ENCODE measurements at regions of chr14 and their contacts with region 1.

Region 1: DNA sequence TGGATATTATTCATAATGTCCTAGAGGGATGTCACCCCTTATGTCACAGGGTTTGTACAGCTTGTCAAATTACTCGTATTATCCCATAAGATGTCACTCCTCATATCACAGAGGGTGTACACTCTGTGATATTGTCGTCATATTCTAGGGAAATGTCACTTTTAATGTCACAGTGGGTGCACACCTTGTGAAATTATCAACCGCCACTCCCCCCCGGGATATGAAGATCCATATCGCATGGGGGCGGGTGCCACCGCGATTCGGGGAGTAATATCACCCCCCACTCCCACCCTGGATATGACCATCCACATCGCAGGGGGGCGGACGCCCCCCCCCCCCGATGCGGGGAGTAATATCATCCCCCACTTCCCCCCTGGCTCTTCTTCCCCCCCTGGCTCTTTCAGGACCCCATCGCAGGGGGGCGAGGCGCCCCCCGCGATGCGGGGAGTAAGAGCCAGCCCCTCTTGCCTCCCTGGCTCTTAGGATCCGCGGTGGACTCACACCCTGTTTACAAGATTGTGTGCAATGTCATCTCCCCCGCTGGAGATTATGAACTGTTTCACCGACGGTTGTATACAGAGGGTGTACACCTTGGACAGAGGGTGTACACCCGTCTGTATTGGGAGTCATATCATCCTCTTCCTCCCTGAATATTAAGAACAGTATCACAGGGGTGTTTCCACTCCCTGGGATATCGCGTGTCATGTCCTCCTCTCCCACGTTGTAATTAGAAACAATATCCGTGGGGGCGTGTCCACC is 92.8 kb downstream of the FRMD6 start:
- DNase-seq: peak; percentile 44
- H3K4me3 Mint-ChIP-seq: no peak overlapping the region
- H3K27ac Mint-ChIP-seq: no peak overlapping the region
- H3K4me1 Mint-ChIP-seq: no peaks in the 10 kb centered on the region
- H3K27me3 Mint-ChIP-seq: peaks cover 4% of the 10 kb centered on the region

Region 2: GRCh38 chr14:51248016-51248987 is 496.2 kb before region 1 on chr14:
- CTCF ChIA-PET with region 1: no interaction called
- POLR2A ChIA-PET with region 1: no interaction called
- intact Hi-C with region 1: no loop called
- DNase-seq: no peak
- H3K4me3 Mint-ChIP-seq: no peak overlapping the region
- H3K27ac Mint-ChIP-seq: no peak overlapping the region
- H3K4me1 Mint-ChIP-seq: peaks cover 30% of the 10 kb centered on the region
- H3K27me3 Mint-ChIP-seq: no peaks in the 10 kb centered on the region

Region 3: DNA sequence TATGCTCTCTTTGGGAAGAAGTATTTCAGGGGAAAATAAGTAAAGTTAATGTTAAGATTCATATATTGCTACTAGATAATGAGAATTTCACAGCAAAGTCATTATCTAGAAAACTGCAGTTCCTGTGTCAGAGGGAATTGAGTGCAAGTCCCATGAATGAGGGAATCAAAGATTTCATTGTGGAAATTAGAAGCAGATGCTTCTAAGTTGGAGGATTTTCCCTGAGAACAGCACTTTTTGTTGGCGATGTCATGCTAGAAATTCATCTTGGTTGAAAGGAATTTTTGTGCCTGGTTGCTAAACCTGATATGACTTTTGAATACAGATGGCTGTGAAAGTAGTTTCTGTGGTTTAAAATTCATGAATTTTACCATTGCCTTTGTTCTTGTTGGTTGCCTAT is 67.3 kb before region 1 on chr14:
- CTCF ChIA-PET with region 1: no interaction called
- POLR2A ChIA-PET with region 1: no interaction called
- intact Hi-C with region 1: loop called (anchors 2 kb)
- DNase-seq: no peak
- H3K4me3 Mint-ChIP-seq: no peak overlapping the region
- H3K27ac Mint-ChIP-seq: no peak overlapping the region
- H3K4me1 Mint-ChIP-seq: peaks cover 18% of the 10 kb centered on the region
- H3K27me3 Mint-ChIP-seq: peaks cover 19% of the 10 kb centered on the region

Region 4: GRCh38 chr14:51865953-51866747 is 121.6 kb after region 1 on chr14:
- CTCF ChIA-PET with region 1: no interaction called
- POLR2A ChIA-PET with region 1: no interaction called
- intact Hi-C with region 1: loop called (anchors 5 kb)
- DNase-seq: peak; percentile 46
- H3K4me3 Mint-ChIP-seq: no peak overlapping the region
- H3K27ac Mint-ChIP-seq: no peak overlapping the region
- H3K4me1 Mint-ChIP-seq: peaks cover 19% of the 10 kb centered on the region
- H3K27me3 Mint-ChIP-seq: no peaks in the 10 kb centered on the region

Region 5: GRCh38 chr14:52531481-52531880 is 786.9 kb after region 1 on chr14:
- CTCF ChIA-PET with region 1: no interaction called
- POLR2A ChIA-PET with region 1: no interaction called
- intact Hi-C with region 1: loop called (anchors 10 kb)
- DNase-seq: no peak
- H3K4me3 Mint-ChIP-seq: no peak overlapping the region
- H3K27ac Mint-ChIP-seq: no peak overlapping the region
- H3K4me1 Mint-ChIP-seq: no peaks in the 10 kb centered on the region
- H3K27me3 Mint-ChIP-seq: no peaks in the 10 kb centered on the region